SK-N-SH (cell line): ENCODE measurements at regions of chr20 and their contacts with region 1.

Region 1: GRCh38 chr20:31572701-31573554 is 32.2 kb upstream of the ID1 start:
- DNase-seq: peak; percentile 93
- H3K4me3 ChIP-seq: peak overlapping the region; percentile 52 to 59
- H3K27ac ChIP-seq: peak overlapping the region; percentile 93 to 97
- H3K4me1 ChIP-seq: peaks cover 45 to 48% of the 10 kb centered on the region in 2 experiments
- H3K27me3 ChIP-seq: no peaks in the 10 kb centered on the region
- CTCF ChIP-seq: no peak
- EP300 ChIP-seq: peak; percentile 63 to 94
- RAD21 ChIP-seq: no peak; the same call in 1 of the 2 replicates

Region 2: DNA sequence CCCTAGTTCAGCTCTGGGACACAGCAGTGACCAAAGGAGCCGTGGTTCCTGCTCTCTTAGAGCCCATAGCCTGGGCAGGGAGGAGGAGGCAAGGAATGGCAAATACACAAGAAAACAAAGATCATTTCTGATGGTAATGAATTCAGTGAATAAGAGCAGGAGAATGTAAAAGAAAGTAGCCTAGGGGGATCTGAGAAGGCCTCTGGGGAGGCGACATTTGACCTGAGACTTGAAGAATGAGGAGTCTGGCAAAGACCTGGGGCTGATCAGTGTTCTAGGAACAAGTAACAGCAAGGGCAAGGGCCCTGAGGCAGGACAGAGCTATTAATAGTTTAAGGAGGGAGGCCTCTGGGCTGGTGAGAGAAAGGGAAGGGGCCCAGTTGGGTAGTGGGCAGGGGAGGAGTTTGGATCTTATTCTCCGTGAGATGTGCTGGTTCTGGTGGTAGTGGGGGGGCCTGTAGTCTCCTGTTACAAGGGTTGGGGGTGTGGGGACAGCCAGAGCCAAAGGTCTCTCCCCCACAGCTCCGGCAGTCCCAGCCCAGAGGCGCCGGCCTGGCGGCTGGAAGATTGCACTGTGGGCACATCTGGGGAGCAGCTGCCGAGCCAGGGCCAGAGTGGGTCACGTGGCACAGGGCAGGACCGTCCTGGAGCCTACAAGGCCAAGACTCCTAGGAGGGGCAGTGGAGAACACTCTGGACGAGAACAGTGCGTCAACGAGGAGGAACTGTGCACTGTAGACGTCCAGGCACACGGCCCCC is 22.9 kb after region 1 on chr20:
- CTCF ChIA-PET with region 1: interaction called, 1,802 read pairs
- POLR2A ChIA-PET with region 1: interaction called, 25 read pairs
- DNase-seq: peak; percentile 90
- H3K4me3 ChIP-seq: no peak overlapping the region
- H3K27ac ChIP-seq: peak overlapping the region; percentile 86 to 91
- H3K4me1 ChIP-seq: peaks cover 6 to 10% of the 10 kb centered on the region in 2 experiments; a peak in 1 of 4 replicates
- H3K27me3 ChIP-seq: no peaks in the 10 kb centered on the region
- CTCF ChIP-seq: no peak
- EP300 ChIP-seq: peak; percentile 74 to 92
- RAD21 ChIP-seq: no peak

Region 3: DNA sequence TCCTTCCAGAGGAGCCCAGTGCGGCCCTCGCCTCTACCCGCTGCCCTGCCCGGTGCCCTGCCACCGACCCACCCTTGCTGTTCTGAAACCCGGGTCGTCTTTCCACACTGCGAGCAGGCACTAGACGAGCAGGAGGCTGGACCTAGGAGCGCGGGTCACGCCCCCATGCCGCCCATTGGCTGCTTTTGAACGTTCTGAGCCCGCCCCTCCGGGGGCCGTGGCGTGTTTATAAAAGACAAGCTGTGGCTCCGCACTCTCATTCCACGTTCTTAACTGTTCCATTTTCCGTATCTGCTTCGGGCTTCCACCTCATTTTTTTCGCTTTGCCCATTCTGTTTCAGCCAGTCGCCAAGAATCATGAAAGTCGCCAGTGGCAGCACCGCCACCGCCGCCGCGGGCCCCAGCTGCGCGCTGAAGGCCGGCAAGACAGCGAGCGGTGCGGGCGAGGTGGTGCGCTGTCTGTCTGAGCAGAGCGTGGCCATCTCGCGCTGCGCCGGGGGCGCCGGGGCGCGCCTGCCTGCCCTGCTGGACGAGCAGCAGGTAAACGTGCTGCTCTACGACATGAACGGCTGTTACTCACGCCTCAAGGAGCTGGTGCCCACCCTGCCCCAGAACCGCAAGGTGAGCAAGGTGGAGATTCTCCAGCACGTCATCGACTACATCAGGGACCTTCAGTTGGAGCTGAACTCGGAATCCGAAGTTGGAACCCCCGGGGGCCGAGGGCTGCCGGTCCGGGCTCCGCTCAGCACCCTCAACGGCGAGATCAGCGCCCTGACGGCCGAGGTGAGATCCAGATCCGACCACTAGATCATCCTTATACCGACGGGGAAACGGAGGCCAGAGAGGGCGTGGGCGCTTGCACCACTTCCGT is 32.3 kb after region 1 on chr20 and contains the start of gene ID1:
- CTCF ChIA-PET with region 1: interaction called, 1,802 read pairs
- POLR2A ChIA-PET with region 1: interaction called, 181 read pairs
- DNase-seq: peak; percentile 92
- H3K4me3 ChIP-seq: peak within 1 kb of the TSS; percentile 80 to 96
- H3K27ac ChIP-seq: peak within 1 kb of the TSS; percentile 97 to 100
- H3K4me1 ChIP-seq: peaks cover 22 to 31% of the 10 kb centered on the region in 2 experiments
- H3K27me3 ChIP-seq: no peaks in the 10 kb centered on the region
- CTCF ChIP-seq: no peak
- EP300 ChIP-seq: 0 out of 4 replicates have a peak, but pooled peaks of 1 of the 2 experiments have one; percentile 6
- RAD21 ChIP-seq: no peak
- polyA plus RNA-seq, gene ID1: 324 and 493 TPM in 2 replicates

Region 4: GRCh38 chr20:31630187-31630790 is 57.4 kb after region 1 on chr20:
- CTCF ChIA-PET with region 1: interaction called, 1,802 read pairs
- POLR2A ChIA-PET with region 1: interaction called, 4 read pairs
- DNase-seq: no peak
- H3K4me3 ChIP-seq: no peak overlapping the region
- H3K27ac ChIP-seq: peak overlapping the region in 1 of 2 experiments; percentile 16; a peak in 1 of 4 replicates
- H3K4me1 ChIP-seq: peaks cover 0 to 6% of the 10 kb centered on the region in 2 experiments; a peak in 1 of 4 replicates
- H3K27me3 ChIP-seq: no peaks in the 10 kb centered on the region
- CTCF ChIP-seq: no peak
- EP300 ChIP-seq: no peak
- RAD21 ChIP-seq: no peak

Region 5: DNA sequence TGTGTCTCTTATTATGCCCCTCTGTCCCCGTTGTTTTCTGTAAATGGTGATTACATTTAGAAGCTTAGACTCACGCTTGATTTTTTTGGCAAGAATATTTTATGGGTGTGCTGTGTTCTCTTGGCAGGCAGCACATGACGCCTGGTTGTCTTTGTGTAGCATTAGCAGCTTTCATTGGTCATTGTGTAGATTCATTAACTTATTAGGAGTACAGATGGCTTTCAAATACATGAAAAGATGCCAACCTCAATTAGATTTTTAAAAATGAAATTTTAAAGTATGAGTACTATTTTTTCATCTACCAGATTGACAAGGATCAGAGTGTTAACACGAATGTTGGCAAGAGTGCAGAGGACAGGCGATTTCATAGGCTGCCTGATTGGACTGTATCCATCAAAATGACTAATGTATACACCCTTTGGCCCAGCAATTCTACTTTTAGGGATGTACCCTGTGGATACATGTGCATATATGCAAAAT is 80.0 kb after region 1 on chr20:
- CTCF ChIA-PET with region 1: interaction called, 14 read pairs
- POLR2A ChIA-PET with region 1: interaction called, 3 read pairs
- DNase-seq: peak; percentile 67
- H3K4me3 ChIP-seq: no peak overlapping the region
- H3K27ac ChIP-seq: peak overlapping the region; percentile 34 to 86; a peak in 3 of 4 replicates
- H3K4me1 ChIP-seq: peaks cover 12 to 23% of the 10 kb centered on the region in 2 experiments; a peak in 3 of 4 replicates
- H3K27me3 ChIP-seq: no peaks in the 10 kb centered on the region
- CTCF ChIP-seq: no peak
- EP300 ChIP-seq: peak in 1 of 2 experiments; percentile 95; a peak in 2 of 4 replicates
- RAD21 ChIP-seq: no peak; the same call in 1 of the 2 replicates